ENCODE measurements at regions of chr5 and their contacts with region 1.

Region 1: GRCh38 chr5:56358703-56359681 is 125.9 kb upstream of the ANKRD55 start:
- DNase-seq: no peak
- ATAC-seq: no peak
- H3K4me3 Mint-ChIP-seq: no peak overlapping the region
- H3K27ac Mint-ChIP-seq: no peak overlapping the region
- H3K4me1 Mint-ChIP-seq: peaks cover 14% of the 10 kb centered on the region
- H3K27me3 Mint-ChIP-seq: no peaks in the 10 kb centered on the region
- CTCF ChIP-seq: no peak

Region 2: DNA sequence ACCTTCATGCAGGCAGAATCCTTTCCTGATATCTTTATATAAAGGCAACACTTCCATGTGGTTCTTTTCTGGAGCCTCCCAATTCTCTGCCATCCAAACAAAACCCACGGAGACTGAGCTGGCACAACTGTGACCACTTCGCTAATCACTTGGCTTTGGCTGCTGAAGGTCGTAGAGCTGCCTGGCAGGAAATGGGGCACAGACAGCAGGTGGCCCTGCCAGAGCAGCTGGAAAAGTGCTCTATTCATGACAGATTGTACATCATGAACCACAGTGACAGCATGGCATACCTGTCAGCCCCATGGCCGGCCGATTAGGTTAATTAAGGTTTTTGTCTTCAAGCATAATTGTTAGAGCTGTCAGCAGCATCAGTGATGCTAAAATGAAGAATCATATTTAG is 16.0 kb after region 1 on chr5:
- CTCF ChIA-PET with region 1: no interaction called
- POLR2A ChIA-PET with region 1: no interaction called
- intact Hi-C with region 1: loop called (anchors 2 kb)
- DNase-seq: no peak
- ATAC-seq: no peak
- H3K4me3 Mint-ChIP-seq: no peak overlapping the region
- H3K27ac Mint-ChIP-seq: no peak overlapping the region
- H3K4me1 Mint-ChIP-seq: peaks cover 4% of the 10 kb centered on the region
- H3K27me3 Mint-ChIP-seq: no peaks in the 10 kb centered on the region
- CTCF ChIP-seq: no peak